PC-9 (cell line): ENCODE measurements at regions of chr22 and their contacts with region 1.

Region 1: DNA sequence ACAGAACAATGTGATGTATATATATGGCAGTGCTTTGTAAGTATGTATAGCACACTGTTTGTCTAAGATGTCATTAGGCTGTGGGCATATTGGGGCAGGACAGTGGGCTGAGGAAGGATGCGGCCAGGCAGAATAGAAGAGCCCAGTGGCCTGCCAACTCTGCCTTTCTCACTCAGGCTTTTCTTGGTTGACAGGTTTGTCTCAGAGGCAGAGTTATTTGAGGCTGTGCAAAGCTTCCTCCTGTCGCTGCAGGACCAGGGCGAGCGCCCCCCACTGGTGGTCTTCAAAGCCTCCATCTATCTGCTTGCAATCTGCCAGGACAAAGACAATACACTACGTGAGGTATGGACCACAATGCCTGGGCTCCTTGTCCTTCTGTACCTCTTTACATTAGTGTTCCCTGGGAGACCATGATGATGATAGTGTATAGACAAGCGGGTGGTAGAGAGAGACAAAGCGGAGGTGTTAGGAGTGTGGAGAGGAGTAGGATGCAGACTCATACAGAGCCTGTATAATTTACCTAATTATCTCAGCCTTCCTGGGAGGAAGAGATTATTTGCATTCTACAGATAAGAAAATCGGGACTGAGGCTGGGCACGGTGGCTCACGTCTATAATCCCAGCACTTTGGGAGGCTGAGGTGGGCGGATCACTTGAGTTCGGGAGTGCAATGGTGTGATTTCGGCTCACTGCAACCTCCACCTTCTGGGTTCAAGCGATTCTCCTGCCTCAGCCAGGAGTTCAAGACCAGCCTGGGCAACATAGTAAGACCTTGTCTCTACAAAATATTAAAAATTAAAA is 37.3 kb upstream of the CCDC134 start:
- DNase-seq: peak in 1 of 2 experiments; percentile 14
- H3K4me3 ChIP-seq: no peak overlapping the region
- H3K27ac ChIP-seq: no peak overlapping the region
- H3K4me1 ChIP-seq: 0 out of 2 replicates have a peak, but pooled peaks cover 8% of the 10 kb centered on the region
- H3K27me3 ChIP-seq: no peaks in the 10 kb centered on the region
- CTCF ChIP-seq: peak; percentile 68

Region 2: GRCh38 chr22:41468381-41469217 is 294.6 kb before region 1 on chr22 and contains the starts of genes ACO2 and PHF5A:
- CTCF ChIA-PET with region 1: no interaction called
- POLR2A ChIA-PET with region 1: interaction called, 15 read pairs
- intact Hi-C with region 1: no loop called
- DNase-seq: peak; percentile 94 to 96
- H3K4me3 ChIP-seq: peak within 1 kb of the TSS; percentile 84
- H3K27ac ChIP-seq: peak within 1 kb of the TSS; percentile 78
- H3K4me1 ChIP-seq: peaks cover 25% of the 10 kb centered on the region
- H3K27me3 ChIP-seq: no peaks in the 10 kb centered on the region
- CTCF ChIP-seq: no peak
- total RNA-seq, gene ACO2: 76.7 and 80.0 TPM in 2 replicates
- total RNA-seq, gene PHF5A: 49.1 and 62.9 TPM in 2 replicates

Region 3: DNA sequence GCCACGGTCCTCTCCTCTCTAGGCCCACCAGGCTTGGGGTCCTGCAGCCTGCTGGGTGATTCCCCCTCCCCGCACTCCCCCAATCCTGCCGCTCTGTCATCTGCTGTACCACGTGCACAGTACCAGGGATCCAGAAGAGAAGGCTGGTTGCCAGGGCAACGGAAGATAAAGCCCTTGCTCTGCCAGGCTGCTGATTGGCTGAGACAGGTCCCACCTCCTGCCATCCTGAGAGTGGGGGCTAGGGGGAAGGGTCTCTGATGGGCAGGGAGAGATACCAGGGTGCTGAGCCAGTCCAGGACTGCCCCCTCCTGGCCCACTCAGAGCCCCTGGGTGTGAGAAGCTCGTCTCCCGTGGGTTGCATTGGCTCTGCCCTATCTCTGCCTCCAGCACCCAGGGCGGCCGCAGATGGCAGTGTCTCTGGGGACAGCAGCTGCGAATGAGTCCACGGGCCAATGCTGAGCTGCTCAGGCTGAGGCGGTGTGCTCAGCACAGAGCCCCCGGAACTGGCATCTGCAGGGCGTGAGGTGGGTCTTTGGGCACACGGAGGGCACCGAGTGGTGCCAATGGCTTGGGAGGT is 188.8 kb after region 1 on chr22 and contains the start of gene SMIM45:
- CTCF ChIA-PET with region 1: interaction called, 16 read pairs
- POLR2A ChIA-PET with region 1: no interaction called
- intact Hi-C with region 1: no loop called
- DNase-seq: no peak
- H3K4me3 ChIP-seq: no peak within 1 kb of the TSS
- H3K27ac ChIP-seq: no peak within 1 kb of the TSS
- H3K4me1 ChIP-seq: peaks cover 7% of the 10 kb centered on the region
- H3K27me3 ChIP-seq: no peaks in the 10 kb centered on the region
- CTCF ChIP-seq: no peak